ENCODE measurements at regions of chr1 and their contacts with region 1.

Region 1: GRCh38 chr1:110209715-110210603 is at the start of gene KCNC4:
- DNase-seq: no peak
- H3K4me3 ChIP-seq: peak within 1 kb of the TSS; percentile 57
- CTCF ChIP-seq: no peak

Region 2: GRCh38 chr1:110188035-110188618 is 21.8 kb before region 1 on chr1:
- CTCF ChIA-PET with region 1: interaction called, 74 read pairs
- POLR2A ChIA-PET with region 1: no interaction called
- DNase-seq: no peak
- H3K4me3 ChIP-seq: no peak overlapping the region
- CTCF ChIP-seq: no peak

Region 3: DNA sequence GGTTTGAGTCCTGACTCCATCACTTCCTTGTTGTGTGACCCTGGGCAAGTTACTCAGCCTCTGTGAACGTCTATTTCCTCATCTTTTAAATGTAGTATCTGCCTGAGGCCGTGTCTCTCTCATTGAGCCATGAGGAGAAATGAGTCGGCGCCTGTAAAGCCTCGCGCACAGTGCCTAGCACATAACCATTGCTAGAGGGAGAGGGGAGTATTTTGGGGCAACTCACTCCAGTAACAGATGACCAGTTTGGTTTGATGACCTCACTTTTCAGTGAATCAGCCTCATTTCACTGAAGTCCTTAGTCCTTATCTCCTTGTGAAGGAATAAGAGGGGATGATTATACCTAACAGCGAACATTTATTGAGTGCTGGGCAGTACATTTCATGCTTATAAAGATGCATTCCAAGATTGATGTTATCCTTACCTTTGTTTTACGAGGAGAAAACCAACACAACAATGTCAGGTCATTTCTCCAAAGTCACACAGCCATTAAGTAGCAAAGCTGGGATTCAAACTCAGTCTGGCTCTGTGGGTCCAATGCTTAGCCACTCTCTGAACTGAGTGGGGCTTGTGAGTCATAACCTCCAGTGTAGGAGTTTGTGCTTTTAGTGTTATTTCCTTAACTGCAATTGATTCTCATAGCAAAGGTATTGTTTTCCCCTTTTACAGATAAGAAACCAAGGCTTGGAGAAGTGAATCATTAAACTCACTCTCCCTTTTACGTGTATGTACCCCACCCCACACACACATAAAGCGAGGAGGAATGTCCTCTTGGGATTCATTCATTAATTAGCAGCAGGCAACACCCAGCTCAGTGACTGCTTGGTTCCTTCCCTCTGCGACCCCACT is 26.1 kb after region 1 on chr1:
- CTCF ChIA-PET with region 1: interaction called, 25 read pairs
- POLR2A ChIA-PET with region 1: no interaction called
- DNase-seq: peak; percentile 28
- H3K4me3 ChIP-seq: no peak overlapping the region
- CTCF ChIP-seq: no peak

Region 4: GRCh38 chr1:110319332-110320152 is 109.6 kb after region 1 on chr1:
- CTCF ChIA-PET with region 1: interaction called, 1,192 read pairs
- POLR2A ChIA-PET with region 1: no interaction called
- DNase-seq: no peak
- H3K4me3 ChIP-seq: no peak overlapping the region
- CTCF ChIP-seq: no peak

Region 5: DNA sequence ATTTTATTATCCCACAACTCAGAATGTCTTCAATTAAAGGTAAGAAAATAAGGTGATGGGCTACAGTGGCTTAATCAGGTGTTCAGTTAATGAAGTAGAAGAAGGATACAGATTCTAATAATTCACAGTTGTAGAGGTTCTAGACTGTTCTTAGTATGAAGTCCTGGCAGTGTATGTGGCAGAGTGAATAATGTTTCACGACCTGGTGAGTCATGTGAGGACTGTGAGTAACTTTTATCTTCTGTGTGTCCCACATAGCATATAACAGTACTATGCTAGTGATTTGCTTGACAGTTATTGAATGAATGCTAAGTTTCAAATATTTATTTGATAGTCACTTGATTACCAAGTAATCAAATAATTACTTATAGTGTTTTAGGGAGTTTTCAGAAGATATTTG is 160.9 kb after region 1 on chr1:
- CTCF ChIA-PET with region 1: interaction called, 10 read pairs
- POLR2A ChIA-PET with region 1: no interaction called
- DNase-seq: peak; percentile 16
- H3K4me3 ChIP-seq: no peak overlapping the region
- CTCF ChIP-seq: no peak

Region 6: DNA sequence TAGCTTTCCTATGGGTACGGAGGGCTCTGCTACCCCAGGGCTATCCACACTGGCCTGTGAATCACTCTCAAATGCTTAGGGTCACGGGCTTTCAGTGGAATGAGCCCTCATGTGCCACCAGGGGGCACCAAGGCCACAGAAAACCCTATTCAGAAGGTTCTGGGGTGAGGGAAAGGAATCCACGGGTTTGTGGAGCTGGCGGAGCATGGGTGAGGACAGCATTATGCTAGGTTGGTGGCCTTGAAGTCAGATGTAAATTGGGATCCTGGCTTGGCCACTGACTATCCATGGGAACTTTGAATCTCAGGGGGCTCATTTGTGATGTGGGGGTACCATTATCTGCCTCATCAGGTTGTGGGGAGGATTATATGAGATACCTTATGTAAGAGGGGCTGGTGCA is 202.6 kb after region 1 on chr1:
- CTCF ChIA-PET with region 1: interaction called, 41 read pairs
- POLR2A ChIA-PET with region 1: interaction called, 3 read pairs
- DNase-seq: no peak
- H3K4me3 ChIP-seq: no peak overlapping the region
- CTCF ChIP-seq: peak; percentile 83

Measured in AG04449 (cell line).